ENCODE measurements at regions of chr6 and their contacts with region 1.

Region 1: DNA sequence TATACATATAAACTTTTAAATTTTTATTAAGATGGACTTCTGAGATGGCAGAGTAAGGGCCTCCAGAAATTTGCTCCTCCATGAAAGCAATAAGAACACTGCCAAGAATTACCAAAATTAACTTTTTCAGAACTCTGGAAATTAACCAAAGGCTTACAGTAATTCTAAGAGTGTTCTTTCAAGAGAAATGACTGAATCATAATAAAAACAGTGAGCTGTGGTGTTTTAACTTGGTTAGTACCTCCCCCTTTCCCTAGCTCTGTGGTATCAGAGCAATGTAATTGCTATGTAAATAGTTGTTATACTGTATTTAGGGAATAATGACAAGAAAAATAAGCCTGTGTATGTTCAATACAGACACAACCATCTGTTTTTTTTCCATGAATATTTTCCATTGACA is 19.0 kb downstream of the HECA start:
- DNase-seq: no peak
- ATAC-seq: peak in 1 of 4 experiments; percentile 38
- H3K4me3 ChIP-seq: no peak overlapping the region
- H3K4me3 Mint-ChIP-seq: peak overlapping the region in 1 of 3 donors; percentile 16
- H3K27ac ChIP-seq: no peak overlapping the region
- H3K27ac Mint-ChIP-seq: peak overlapping the region; percentile 62 to 73
- H3K4me1 ChIP-seq: peaks cover 60 to 67% of the 10 kb centered on the region in 2 experiments
- H3K4me1 Mint-ChIP-seq: peaks cover 86 to 91% (median 88%) of the 10 kb centered on the region in 3 donors
- H3K27me3 ChIP-seq: no peaks in the 10 kb centered on the region
- H3K27me3 Mint-ChIP-seq: no peaks in the 10 kb centered on the region

Region 2: GRCh38 chr6:137847714-137848113 is 1306.1 kb before region 1 on chr6:
- CTCF ChIA-PET with region 1: interaction called in 1 of 2 experiments, 10 read pairs
- POLR2A ChIA-PET with region 1: no interaction called
- DNase-seq: no peak
- ATAC-seq: no peak
- H3K4me3 ChIP-seq: no peak overlapping the region
- H3K4me3 Mint-ChIP-seq: no peak overlapping the region
- H3K27ac ChIP-seq: no peak overlapping the region
- H3K27ac Mint-ChIP-seq: no peak overlapping the region
- H3K4me1 ChIP-seq: peaks cover 0 to 5% of the 10 kb centered on the region in 2 experiments
- H3K4me1 Mint-ChIP-seq: peaks cover 0 to 5% (median 4%) of the 10 kb centered on the region in 3 donors
- H3K27me3 ChIP-seq: no peaks in the 10 kb centered on the region
- H3K27me3 Mint-ChIP-seq: no peaks in the 10 kb centered on the region

Region 3: GRCh38 chr6:138600726-138601125 is 553.1 kb before region 1 on chr6:
- CTCF ChIA-PET with region 1: no interaction called
- POLR2A ChIA-PET with region 1: no interaction called
- DNase-seq: no peak
- ATAC-seq: no peak
- H3K4me3 ChIP-seq: no peak overlapping the region
- H3K4me3 Mint-ChIP-seq: no peak overlapping the region
- H3K27ac ChIP-seq: no peak overlapping the region
- H3K27ac Mint-ChIP-seq: no peak overlapping the region
- H3K4me1 ChIP-seq: no peaks in the 10 kb centered on the region
- H3K4me1 Mint-ChIP-seq: no peaks in the 10 kb centered on the region
- H3K27me3 ChIP-seq: no peaks in the 10 kb centered on the region
- H3K27me3 Mint-ChIP-seq: peaks cover 20 to 22% of the 10 kb centered on the region in 2 donors